Activated B cell treated with CpG ODN at 0.5 μM for 24 hours (primary cell): ENCODE measurements at regions of chr3 and their contacts with region 1.

Region 1: DNA sequence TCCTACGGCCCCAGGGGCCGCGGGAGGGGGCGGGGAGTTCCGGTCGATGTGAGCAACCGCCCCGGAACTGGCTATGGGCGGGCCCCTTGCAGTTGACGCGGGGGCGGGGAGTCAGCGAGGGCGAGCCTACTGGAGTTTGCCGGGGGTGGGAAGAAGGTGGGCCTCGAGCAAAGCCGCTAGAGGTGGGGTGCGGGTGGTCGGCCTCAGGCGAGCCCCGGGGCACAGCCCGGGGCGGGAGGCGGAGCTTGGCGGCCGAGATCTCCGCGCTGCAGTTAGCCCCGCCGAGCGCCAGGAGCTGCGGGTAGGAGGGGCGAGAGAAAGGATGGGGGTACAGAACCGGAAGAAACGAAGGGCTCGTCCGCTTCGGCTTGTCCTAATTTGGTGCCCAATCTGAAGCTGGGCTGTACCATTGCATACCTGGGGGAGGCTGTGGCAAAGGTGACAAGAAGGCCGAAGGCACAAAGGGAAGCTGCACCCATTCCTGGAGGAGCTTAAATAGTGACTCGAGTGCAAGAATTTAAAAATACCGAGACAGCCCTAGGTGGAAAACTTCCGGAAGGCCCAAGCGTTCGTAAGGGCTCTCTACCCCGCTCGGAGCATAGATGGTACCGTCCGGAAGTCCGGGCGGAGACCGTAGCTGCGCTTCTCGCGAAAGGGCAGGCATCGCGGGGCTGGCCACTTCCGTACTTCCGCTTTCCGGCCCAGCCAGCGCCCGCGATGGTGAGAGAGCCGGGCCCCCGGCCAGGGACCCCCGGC is at the starts of genes ARPC4 and TADA3:
- DNase-seq: peak; percentile 92
- ATAC-seq: peak; percentile 75
- H3K4me3 Mint-ChIP-seq: peak within 1 kb of the TSS; percentile 99
- H3K27ac Mint-ChIP-seq: peak within 1 kb of the TSS; percentile 100
- H3K4me1 Mint-ChIP-seq: peaks cover 67% of the 10 kb centered on the region
- H3K27me3 Mint-ChIP-seq: no peaks in the 10 kb centered on the region
- CTCF ChIP-seq: no peak
- total RNA-seq, gene ARPC4: 315 and 338 TPM in 2 replicates
- total RNA-seq, gene TADA3: 43.8 and 44.7 TPM in 2 replicates

Region 2: DNA sequence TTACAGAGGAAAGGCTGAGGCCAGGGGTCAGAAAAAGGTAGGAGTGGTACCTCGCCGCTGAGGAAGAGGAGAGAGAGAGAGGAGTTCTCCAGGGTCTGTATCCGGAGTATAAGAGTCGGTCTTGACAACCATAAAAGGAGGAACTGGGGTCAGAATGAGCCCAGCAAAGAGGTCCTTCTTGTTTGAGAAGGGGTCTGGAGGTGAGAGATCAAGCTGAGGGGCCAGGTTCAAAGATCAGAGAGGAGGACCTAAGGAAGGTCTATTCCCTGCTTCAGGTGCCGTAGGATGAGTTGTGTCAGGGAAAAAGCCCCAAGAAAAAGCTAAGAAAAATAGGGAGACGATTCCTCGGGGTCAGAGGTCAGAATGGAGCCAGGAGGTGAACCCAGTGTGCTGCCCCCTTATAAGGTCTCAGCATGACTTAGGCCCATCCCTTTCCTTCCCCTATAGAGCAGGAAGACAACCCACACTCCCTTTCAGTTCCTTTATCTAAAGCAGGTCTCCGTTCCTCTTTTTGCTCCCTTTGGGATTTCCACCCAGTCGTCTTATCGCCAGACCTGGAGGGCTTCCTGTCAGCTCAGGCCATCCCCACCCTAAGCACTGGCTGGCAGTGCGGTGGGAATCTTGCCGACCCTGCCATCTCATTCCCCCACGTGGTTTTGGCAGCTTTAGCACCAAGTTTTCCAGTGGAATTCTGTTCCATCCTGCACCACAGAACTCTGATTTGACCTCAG is 142.6 kb before region 1 on chr3:
- CTCF ChIA-PET with region 1: no interaction called
- POLR2A ChIA-PET with region 1: interaction called, 13 read pairs
- intact Hi-C with region 1: loop called (anchors 1 kb)
- DNase-seq: peak; percentile 25
- ATAC-seq: peak; percentile 59
- H3K4me3 Mint-ChIP-seq: peak overlapping the region; percentile 94
- H3K27ac Mint-ChIP-seq: peak overlapping the region; percentile 84
- H3K4me1 Mint-ChIP-seq: peaks cover 54% of the 10 kb centered on the region
- H3K27me3 Mint-ChIP-seq: no peaks in the 10 kb centered on the region
- CTCF ChIP-seq: no peak

Region 3: DNA sequence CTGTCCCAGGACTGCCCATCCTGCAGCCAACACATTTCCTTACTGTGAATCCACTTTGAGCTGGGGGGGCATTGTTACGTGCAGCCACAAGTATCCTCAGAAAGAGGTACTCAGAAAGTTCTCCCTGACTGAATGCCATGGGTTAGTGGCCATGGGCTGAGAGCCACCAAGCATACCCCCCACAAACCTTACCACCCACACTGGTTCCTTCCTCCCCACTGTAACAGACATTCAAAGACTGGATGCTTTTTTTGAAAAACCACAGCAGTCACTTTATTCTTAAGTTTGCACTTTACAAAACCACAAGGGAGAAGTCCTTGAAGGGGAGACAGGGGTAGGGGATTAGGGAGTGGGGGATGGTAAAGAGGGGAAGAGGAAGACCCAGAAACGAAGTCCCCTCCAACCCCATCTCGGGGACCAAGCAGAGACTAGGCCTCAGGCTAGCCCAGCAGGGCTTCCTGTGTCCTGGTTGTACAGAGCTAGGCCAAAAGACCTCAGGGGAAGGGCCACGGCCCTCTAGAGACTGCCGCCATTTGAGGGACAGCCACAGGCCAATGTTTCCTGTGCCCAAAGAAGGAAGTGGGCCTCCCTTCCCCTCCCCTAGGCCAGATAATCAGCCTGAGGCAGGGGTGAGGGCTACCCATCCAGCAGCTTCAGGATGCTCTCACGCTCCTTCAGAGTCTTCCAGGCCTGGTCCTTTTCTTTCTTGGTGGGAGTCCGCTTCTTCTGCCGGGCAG is 12.7 kb before region 1 on chr3:
- CTCF ChIA-PET with region 1: interaction called, 8 read pairs
- POLR2A ChIA-PET with region 1: interaction called, 133 read pairs
- intact Hi-C with region 1: loop called (anchors 1 kb)
- DNase-seq: peak; percentile 30
- ATAC-seq: peak; percentile 76
- H3K4me3 Mint-ChIP-seq: peak overlapping the region; percentile 32
- H3K27ac Mint-ChIP-seq: peak overlapping the region; percentile 88
- H3K4me1 Mint-ChIP-seq: peaks cover 58% of the 10 kb centered on the region
- H3K27me3 Mint-ChIP-seq: no peaks in the 10 kb centered on the region
- CTCF ChIP-seq: no peak

Region 4: GRCh38 chr3:9843715-9844438 is 51.3 kb after region 1 on chr3 and contains the start of gene RPUSD3:
- CTCF ChIA-PET with region 1: no interaction called
- POLR2A ChIA-PET with region 1: interaction called, 10 read pairs
- intact Hi-C with region 1: loop called (anchors 1 kb)
- DNase-seq: peak; percentile 95
- ATAC-seq: peak; percentile 100
- H3K4me3 Mint-ChIP-seq: peak within 1 kb of the TSS; percentile 98
- H3K27ac Mint-ChIP-seq: peak within 1 kb of the TSS; percentile 86
- H3K4me1 Mint-ChIP-seq: peaks cover 20% of the 10 kb centered on the region
- H3K27me3 Mint-ChIP-seq: no peaks in the 10 kb centered on the region
- CTCF ChIP-seq: no peak
- total RNA-seq, gene RPUSD3: 49.5 and 55.7 TPM in 2 replicates

Region 5: DNA sequence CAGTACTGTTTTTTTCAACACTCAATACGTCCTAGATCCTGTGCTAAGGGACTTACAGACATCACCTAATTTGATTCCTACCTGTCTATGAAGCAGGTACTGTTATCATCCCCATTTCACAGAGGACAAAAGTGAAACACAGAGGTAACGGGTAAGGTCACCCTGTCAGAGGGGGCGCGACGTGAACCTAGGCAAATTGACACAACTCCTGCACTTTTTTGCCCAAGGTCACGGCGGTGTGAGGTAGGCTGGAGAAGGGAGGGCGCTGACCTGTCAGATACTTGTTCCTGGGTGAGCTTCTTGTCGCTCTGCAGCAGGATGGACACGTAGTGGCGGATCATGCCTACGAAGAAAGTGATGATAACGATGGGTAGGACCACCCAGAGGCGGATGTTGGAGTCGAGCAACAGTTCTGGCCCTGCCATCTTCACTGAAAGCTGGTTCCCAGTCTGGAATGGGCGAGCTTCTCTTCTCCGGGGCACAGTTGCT is 193.7 kb after region 1 on chr3:
- CTCF ChIA-PET with region 1: no interaction called
- POLR2A ChIA-PET with region 1: interaction called, 11 read pairs
- intact Hi-C with region 1: loop called (anchors 2 kb)
- DNase-seq: no peak
- ATAC-seq: peak; percentile 28
- H3K4me3 Mint-ChIP-seq: peak overlapping the region; percentile 98
- H3K27ac Mint-ChIP-seq: peak overlapping the region; percentile 100
- H3K4me1 Mint-ChIP-seq: peaks cover 24% of the 10 kb centered on the region
- H3K27me3 Mint-ChIP-seq: no peaks in the 10 kb centered on the region
- CTCF ChIP-seq: no peak

Region 6: GRCh38 chr3:10224784-10225665 is 432.4 kb after region 1 on chr3:
- CTCF ChIA-PET with region 1: no interaction called
- POLR2A ChIA-PET with region 1: interaction called, 11 read pairs
- intact Hi-C with region 1: no loop called
- DNase-seq: peak; percentile 32
- ATAC-seq: peak; percentile 63
- H3K4me3 Mint-ChIP-seq: peak overlapping the region; percentile 48
- H3K27ac Mint-ChIP-seq: peak overlapping the region; percentile 61
- H3K4me1 Mint-ChIP-seq: peaks cover 65% of the 10 kb centered on the region
- H3K27me3 Mint-ChIP-seq: no peaks in the 10 kb centered on the region
- CTCF ChIP-seq: peak; percentile 85